ENCODE measurements at regions of chr12 and their contacts with region 1.

Region 1: GRCh38 chr12:68686595-68687521 is at the start of gene NUP107:
- DNase-seq: peak; percentile 99 to 100
- ATAC-seq: peak; percentile 98
- H3K4me3 ChIP-seq: peak within 1 kb of the TSS; percentile 41 to 60
- H3K27ac ChIP-seq: peak within 1 kb of the TSS; percentile 1 to 52
- H3K4me1 ChIP-seq: no peaks in the 10 kb centered on the region
- H3K27me3 ChIP-seq: no peaks in the 10 kb centered on the region
- total RNA-seq, gene NUP107: 36.0 to 53.4 TPM

Region 2: DNA sequence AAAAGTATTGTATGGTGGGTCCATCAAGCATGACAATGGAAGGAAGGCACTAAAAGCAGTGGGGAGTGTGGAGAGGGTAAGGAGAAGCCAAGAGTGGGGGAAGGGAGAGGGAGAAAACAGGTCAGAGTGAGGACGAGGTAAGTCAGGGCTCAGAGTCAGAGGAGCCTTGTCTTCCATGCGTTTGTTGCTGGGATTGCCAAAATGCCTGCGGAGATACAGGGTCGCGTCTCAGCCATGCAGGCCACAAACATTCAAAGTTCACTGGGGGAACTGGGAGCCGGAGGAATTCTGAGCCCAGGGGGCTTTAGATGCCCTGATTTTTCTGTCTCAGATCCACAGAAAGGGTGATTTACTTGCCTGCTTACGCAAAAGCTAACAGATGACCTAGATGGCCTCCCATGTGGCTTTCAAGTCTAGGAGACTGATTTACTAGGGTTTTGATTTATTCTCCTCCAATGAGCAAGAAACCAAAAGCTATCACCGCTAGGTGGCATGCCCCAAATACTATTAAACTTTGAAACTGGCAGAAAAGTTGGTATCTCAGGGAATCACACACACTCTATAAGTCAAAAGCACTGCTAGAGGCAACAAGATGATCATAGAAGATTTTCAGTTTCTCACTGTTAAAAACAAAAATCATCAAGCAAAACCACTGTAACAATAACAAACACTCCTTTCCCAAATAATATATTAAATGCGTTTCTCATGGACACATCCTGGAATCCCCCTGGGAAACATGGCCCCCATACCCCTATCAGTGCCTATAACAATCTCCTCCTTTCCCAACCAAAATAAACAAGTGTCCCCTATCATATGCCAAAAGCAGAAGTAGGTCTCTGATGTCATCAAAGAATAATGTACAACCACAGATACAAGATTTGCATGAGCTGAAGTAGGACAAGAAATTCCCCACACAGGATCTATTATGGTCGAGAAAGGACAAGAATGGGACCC is 328.0 kb before region 1 on chr12:
- intact Hi-C with region 1: loop called (anchors 2 to 5 kb)
- DNase-seq: peak in 1 of 2 donors; percentile 49
- ATAC-seq: peak; percentile 80
- H3K4me3 ChIP-seq: no peak overlapping the region
- H3K27ac ChIP-seq: no peak overlapping the region
- H3K4me1 ChIP-seq: no peaks in the 10 kb centered on the region
- H3K27me3 ChIP-seq: no peaks in the 10 kb centered on the region

Region 3: GRCh38 chr12:68984796-68985573 is 298.1 kb after region 1 on chr12:
- intact Hi-C with region 1: no loop called
- DNase-seq: no peak
- ATAC-seq: no peak
- H3K4me3 ChIP-seq: no peak overlapping the region
- H3K27ac ChIP-seq: no peak overlapping the region
- H3K4me1 ChIP-seq: no peaks in the 10 kb centered on the region
- H3K27me3 ChIP-seq: no peaks in the 10 kb centered on the region

Measured in aorta (tissue), 5 donors.